ENCODE measurements at regions of chr1 and their contacts with region 1.

Region 1: DNA sequence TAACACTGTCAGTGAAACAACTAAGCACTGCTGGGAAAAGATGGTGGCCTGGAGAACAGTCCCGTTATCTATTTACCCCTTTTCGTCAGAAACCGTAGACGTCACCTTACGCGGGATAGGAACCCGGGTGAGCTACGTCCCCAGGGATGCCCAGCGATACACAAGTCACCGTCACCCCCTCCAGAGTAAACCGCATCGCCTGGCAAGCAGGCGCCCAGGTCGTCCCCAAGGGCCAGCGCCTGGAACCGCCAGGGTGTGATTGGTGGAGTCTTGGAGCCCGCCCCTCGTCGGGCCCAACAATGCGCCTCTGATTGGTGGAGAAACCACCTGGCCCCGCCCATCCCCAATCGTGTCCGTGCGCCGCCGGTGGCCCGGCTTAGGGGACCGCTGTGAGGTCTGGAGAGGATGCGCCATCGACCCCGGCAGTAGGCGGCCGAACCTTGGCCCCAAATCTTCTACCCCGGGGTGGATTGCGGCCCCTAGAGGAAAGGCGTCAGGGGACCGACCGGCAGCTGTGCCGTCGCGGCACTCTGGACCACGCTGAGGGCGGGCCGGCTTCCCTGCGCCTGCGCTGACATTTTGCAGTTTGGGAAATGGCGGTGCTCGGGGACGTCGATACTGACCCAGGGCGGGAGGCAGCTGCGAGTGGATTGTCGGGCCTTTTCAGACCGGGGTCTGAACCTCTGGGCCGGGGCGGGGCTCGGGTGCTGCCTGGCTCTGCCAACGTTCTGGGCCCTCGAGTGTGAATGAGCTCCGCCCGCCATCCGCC is 34.4 kb downstream of the SLC2A1 start:
- DNase-seq: peak; percentile 78 to 94 (median 91)
- ATAC-seq: peak; percentile 90
- H3K4me3 ChIP-seq: peak overlapping the region; percentile 90 to 96
- H3K4me3 Mint-ChIP-seq: peak overlapping the region; percentile 95
- H3K27ac ChIP-seq: peak overlapping the region; percentile 83 to 91
- H3K27ac Mint-ChIP-seq: peak overlapping the region; percentile 98
- H3K4me1 ChIP-seq: peaks cover 15% of the 10 kb centered on the region
- H3K4me1 Mint-ChIP-seq: peaks cover 35% of the 10 kb centered on the region
- H3K27me3 ChIP-seq: no peaks in the 10 kb centered on the region
- H3K27me3 Mint-ChIP-seq: no peaks in the 10 kb centered on the region
- CTCF ChIP-seq: no peak

Region 2: DNA sequence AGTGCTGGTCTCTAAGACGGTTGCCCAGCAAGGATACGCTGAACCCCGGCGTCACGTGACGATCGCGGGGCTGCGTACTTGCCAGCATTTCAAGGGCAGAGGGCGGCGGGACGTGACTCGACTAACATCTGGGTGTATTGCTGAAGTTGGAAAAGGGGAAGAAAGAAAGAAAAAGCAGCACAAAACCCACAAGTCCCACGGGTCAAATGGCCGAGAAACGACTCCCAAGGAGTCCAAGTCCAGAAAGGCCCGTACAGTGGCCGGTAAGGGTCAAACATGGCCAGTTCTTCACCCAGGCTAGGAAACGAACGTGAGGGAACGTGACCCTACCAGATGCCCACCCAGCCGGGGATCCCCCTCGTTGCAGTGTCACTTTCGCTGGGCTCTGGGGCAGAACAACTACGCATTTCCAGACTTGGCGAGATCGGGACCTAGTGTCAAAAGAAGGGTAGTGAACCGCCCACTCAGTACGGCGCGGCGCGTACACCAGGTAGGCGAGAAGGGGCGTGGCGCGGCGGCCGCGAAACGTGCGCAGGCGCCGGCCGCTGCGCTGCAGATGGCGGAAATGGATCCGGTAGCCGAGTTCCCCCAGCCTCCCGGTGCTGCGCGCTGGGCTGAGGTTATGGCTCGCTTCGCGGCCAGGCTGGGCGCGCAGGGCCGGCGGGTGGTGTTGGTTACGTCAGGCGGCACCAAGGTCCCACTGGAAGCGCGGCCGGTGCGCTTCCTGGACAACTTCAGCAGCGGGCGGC is 468.1 kb before region 1 on chr1 and contains the starts of genes PPCS and ZMYND12:
- CTCF ChIA-PET with region 1: no interaction called
- POLR2A ChIA-PET with region 1: no interaction called
- intact Hi-C with region 1: loop called (anchors 5 to 10 kb)
- DNase-seq: peak; percentile 82 to 98 (median 91)
- ATAC-seq: peak; percentile 92
- H3K4me3 ChIP-seq: peak within 1 kb of the TSS; percentile 99
- H3K4me3 Mint-ChIP-seq: peak within 1 kb of the TSS; percentile 98
- H3K27ac ChIP-seq: peak within 1 kb of the TSS; percentile 99 to 100
- H3K27ac Mint-ChIP-seq: peak within 1 kb of the TSS; percentile 100
- H3K4me1 ChIP-seq: peaks cover 25% of the 10 kb centered on the region
- H3K4me1 Mint-ChIP-seq: peaks cover 37% of the 10 kb centered on the region
- H3K27me3 ChIP-seq: no peaks in the 10 kb centered on the region
- H3K27me3 Mint-ChIP-seq: no peaks in the 10 kb centered on the region
- CTCF ChIP-seq: peak; percentile 34
- total RNA-seq, gene PPCS: 38.0 to 38.1 TPM
- total RNA-seq, gene ZMYND12: 0.56 to 0.76 TPM

Region 3: GRCh38 chr1:42723501-42723900 is 200.8 kb before region 1 on chr1:
- CTCF ChIA-PET with region 1: no interaction called
- POLR2A ChIA-PET with region 1: no interaction called
- intact Hi-C with region 1: no loop called
- DNase-seq: peak in 1 of 9 experiments; percentile 1
- ATAC-seq: no peak
- H3K4me3 ChIP-seq: no peak overlapping the region
- H3K4me3 Mint-ChIP-seq: no peak overlapping the region
- H3K27ac ChIP-seq: no peak overlapping the region
- H3K27ac Mint-ChIP-seq: no peak overlapping the region
- H3K4me1 ChIP-seq: no peaks in the 10 kb centered on the region
- H3K4me1 Mint-ChIP-seq: no peaks in the 10 kb centered on the region
- H3K27me3 ChIP-seq: no peaks in the 10 kb centered on the region
- H3K27me3 Mint-ChIP-seq: no peaks in the 10 kb centered on the region
- CTCF ChIP-seq: no peak

Region 4: DNA sequence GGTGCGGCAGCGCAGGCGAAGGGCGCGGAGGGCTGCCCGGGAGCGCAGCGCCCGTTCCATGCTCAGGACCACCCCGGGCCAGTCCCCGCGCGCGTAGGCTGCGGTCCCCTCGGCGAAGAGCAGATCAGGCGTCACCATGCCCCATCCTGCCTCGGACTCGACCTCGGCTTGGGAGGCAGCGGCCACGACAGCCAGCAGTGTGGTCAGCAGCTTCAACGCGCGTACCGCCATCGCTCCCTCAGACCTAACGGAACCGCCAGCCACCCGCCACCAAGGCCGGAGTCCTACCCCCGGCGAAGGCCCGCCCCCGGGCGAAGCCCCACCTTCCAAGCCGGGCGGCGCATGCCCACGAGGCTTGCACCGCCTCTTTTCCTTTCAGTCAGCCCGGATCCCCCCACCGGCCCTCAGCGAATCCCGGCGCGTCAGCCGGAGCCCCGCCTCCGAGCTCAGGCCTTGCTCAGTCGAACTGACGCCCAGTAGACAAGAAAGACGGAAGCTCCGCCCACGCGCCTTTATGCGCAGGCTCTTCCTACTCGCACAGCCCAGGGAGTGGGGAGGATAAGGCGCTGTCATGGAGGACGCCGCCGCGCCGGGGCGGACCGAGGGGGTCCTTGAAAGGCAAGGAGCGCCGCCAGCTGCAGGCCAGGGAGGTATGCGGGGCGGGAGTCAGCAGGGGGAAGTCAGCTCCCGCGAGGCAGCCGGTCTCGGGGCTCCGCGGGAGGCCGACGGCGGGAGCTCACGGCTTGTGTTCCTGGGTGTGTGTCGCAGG is 157.3 kb before region 1 on chr1 and contains the starts of genes C1orf50 and P3H1:
- CTCF ChIA-PET with region 1: interaction called, 3 read pairs
- POLR2A ChIA-PET with region 1: interaction called, 10 read pairs
- intact Hi-C with region 1: loop called (anchors 1 to 5 kb)
- DNase-seq: peak; percentile 99 to 100 (median 99)
- ATAC-seq: peak; percentile 92
- H3K4me3 ChIP-seq: peak within 1 kb of the TSS; percentile 73 to 97
- H3K4me3 Mint-ChIP-seq: no peak within 1 kb of the TSS
- H3K27ac ChIP-seq: peak within 1 kb of the TSS; percentile 87 to 88
- H3K27ac Mint-ChIP-seq: peak within 1 kb of the TSS; percentile 97
- H3K4me1 ChIP-seq: peaks cover 40% of the 10 kb centered on the region
- H3K4me1 Mint-ChIP-seq: peaks cover 36% of the 10 kb centered on the region
- H3K27me3 ChIP-seq: no peaks in the 10 kb centered on the region
- H3K27me3 Mint-ChIP-seq: no peaks in the 10 kb centered on the region
- CTCF ChIP-seq: no peak
- total RNA-seq, gene C1orf50: 16.1 to 20.3 TPM
- total RNA-seq, gene P3H1: 19.6 to 22.5 TPM

Region 5: GRCh38 chr1:42846257-42847110 is 77.8 kb before region 1 on chr1 and contains the start of gene ZNF691:
- CTCF ChIA-PET with region 1: no interaction called
- POLR2A ChIA-PET with region 1: no interaction called
- intact Hi-C with region 1: loop called in 1 of 2 experiments (anchors 5 kb)
- DNase-seq: peak; percentile 71 to 96 (median 87)
- ATAC-seq: peak; percentile 97
- H3K4me3 ChIP-seq: peak within 1 kb of the TSS; percentile 74 to 96
- H3K4me3 Mint-ChIP-seq: peak within 1 kb of the TSS; percentile 92
- H3K27ac ChIP-seq: peak within 1 kb of the TSS; percentile 46 to 72
- H3K27ac Mint-ChIP-seq: peak within 1 kb of the TSS; percentile 88
- H3K4me1 ChIP-seq: peaks cover 23% of the 10 kb centered on the region
- H3K4me1 Mint-ChIP-seq: peaks cover 38% of the 10 kb centered on the region
- H3K27me3 ChIP-seq: no peaks in the 10 kb centered on the region
- H3K27me3 Mint-ChIP-seq: no peaks in the 10 kb centered on the region
- CTCF ChIP-seq: no peak
- total RNA-seq, gene ZNF691: 1.1 to 1.3 TPM

Region 6: GRCh38 chr1:42952303-42953001 is 28.2 kb after region 1 on chr1:
- CTCF ChIA-PET with region 1: interaction called, 14 read pairs
- POLR2A ChIA-PET with region 1: interaction called, 12 read pairs
- intact Hi-C with region 1: no loop called
- DNase-seq: peak in 7 of 9 experiments; percentile 39 to 76 (median 48)
- ATAC-seq: peak; percentile 59
- H3K4me3 ChIP-seq: peak overlapping the region; percentile 21 to 33
- H3K4me3 Mint-ChIP-seq: peak overlapping the region; percentile 50
- H3K27ac ChIP-seq: peak overlapping the region; percentile 30 to 73
- H3K27ac Mint-ChIP-seq: peak overlapping the region; percentile 76
- H3K4me1 ChIP-seq: peaks cover 93% of the 10 kb centered on the region
- H3K4me1 Mint-ChIP-seq: peaks cover 88% of the 10 kb centered on the region
- H3K27me3 ChIP-seq: no peaks in the 10 kb centered on the region
- H3K27me3 Mint-ChIP-seq: no peaks in the 10 kb centered on the region
- CTCF ChIP-seq: no peak

Region 7: DNA sequence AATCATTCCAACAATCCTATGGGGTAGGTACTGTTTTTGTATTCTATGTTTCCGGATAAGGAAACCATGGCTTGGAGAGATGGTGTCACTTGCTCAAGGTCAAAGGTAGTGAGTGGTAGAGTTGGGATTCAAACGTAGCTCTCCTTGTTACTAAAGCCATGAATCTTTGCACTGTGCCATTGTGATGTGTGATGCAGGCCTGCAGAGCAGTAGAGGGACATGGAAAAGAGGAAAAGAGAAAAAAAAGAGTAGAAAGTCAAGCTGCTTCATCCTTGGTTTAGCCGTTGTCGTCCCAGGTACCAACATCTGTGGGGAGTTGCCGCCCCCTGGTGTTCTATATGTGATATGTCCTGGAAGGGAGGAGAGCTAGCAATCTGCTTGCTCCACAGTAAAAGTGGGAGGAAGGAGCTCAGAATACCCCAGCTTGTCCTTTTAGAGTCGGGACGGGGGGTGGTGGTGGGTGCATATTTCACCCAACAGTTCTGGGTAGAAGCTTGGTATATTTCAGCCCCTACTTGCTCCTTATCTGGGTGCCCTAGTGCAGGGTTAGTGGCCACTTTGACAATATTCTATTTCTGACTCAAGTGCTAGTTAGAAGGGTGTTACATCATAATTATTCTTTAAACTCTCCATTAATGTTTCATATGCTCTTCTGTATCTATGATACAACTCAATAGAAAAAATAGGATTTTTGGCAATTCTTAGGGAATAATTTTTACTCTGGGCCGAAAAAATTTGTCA is 149.4 kb after region 1 on chr1:
- CTCF ChIA-PET with region 1: interaction called, 784 read pairs
- POLR2A ChIA-PET with region 1: interaction called, 33 read pairs
- intact Hi-C with region 1: loop called (anchors 1 to 2 kb)
- DNase-seq: peak; percentile 35 to 86 (median 74)
- ATAC-seq: peak; percentile 89
- H3K4me3 ChIP-seq: no peak overlapping the region
- H3K4me3 Mint-ChIP-seq: no peak overlapping the region
- H3K27ac ChIP-seq: no peak overlapping the region
- H3K27ac Mint-ChIP-seq: no peak overlapping the region
- H3K4me1 ChIP-seq: peaks cover 3% of the 10 kb centered on the region
- H3K4me1 Mint-ChIP-seq: peaks cover 8% of the 10 kb centered on the region
- H3K27me3 ChIP-seq: no peaks in the 10 kb centered on the region
- H3K27me3 Mint-ChIP-seq: no peaks in the 10 kb centered on the region
- CTCF ChIP-seq: peak; percentile 85

Region 8: GRCh38 chr1:43098200-43098599 is 173.9 kb after region 1 on chr1:
- CTCF ChIA-PET with region 1: no interaction called
- POLR2A ChIA-PET with region 1: no interaction called
- intact Hi-C with region 1: no loop called
- DNase-seq: no peak
- ATAC-seq: no peak
- H3K4me3 ChIP-seq: no peak overlapping the region
- H3K4me3 Mint-ChIP-seq: no peak overlapping the region
- H3K27ac ChIP-seq: no peak overlapping the region
- H3K27ac Mint-ChIP-seq: no peak overlapping the region
- H3K4me1 ChIP-seq: no peaks in the 10 kb centered on the region
- H3K4me1 Mint-ChIP-seq: no peaks in the 10 kb centered on the region
- H3K27me3 ChIP-seq: no peaks in the 10 kb centered on the region
- H3K27me3 Mint-ChIP-seq: peaks cover 7% of the 10 kb centered on the region
- CTCF ChIP-seq: no peak

Measured in CD8-positive, alpha-beta T cell (primary cell).